PC-3 (cell line): ENCODE measurements at regions of chr3 and their contacts with region 1.

Region 1: GRCh38 chr3:45626096-45626887 is 31.7 kb downstream of the LIMD1 start:
- DNase-seq: peak; percentile 96
- ATAC-seq: peak; percentile 79
- H3K4me3 ChIP-seq: peak overlapping the region; percentile 47
- H3K27ac ChIP-seq: peak overlapping the region; percentile 98
- H3K4me1 ChIP-seq: peaks cover 41% of the 10 kb centered on the region
- H3K27me3 ChIP-seq: no peaks in the 10 kb centered on the region
- CTCF ChIP-seq: no peak

Region 2: DNA sequence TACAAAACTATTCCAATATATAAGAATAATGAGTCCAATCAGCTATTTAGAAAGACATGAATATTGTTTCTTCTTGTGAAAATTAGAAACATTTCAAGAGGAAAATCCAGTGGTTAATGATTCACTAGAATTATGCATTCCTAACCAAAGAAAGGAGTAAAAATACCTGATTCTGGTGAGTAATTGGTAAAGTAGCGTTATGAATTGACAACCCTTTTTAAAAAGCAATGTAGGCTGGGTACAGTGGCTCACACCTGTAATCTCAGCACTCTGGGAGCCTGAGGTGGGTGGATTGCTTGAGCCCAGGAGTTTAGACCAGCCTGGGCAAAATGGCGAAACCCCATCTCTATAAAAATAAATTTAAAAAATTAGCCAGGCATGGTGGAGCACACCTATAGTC is 1341.3 kb before region 1 on chr3:
- CTCF ChIA-PET with region 1: no interaction called
- POLR2A ChIA-PET with region 1: no interaction called
- intact Hi-C with region 1: no loop called
- DNase-seq: peak; percentile 7
- ATAC-seq: no peak
- H3K4me3 ChIP-seq: no peak overlapping the region
- H3K27ac ChIP-seq: no peak overlapping the region
- H3K4me1 ChIP-seq: no peaks in the 10 kb centered on the region
- H3K27me3 ChIP-seq: no peaks in the 10 kb centered on the region
- CTCF ChIP-seq: no peak

Region 3: DNA sequence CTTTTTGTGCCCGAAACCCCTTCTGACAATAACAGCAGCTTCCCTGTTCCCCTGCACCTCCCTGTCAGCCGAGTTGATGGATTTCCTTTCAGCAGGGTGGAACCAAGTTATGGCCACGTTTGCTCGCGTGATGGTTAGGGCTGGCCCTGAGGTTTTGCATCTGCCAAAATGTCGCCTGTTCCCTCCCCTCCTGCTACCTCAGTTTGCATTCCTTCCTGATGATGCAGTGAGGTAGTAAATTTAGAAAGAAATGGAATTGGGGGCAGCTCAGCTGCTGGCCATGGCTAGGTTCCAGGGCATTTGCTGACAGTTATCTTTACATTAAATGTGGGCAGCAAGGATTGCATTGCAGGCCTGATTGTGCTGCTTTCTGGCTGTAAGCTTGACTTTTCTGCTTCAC is 18.5 kb before region 1 on chr3:
- CTCF ChIA-PET with region 1: no interaction called
- POLR2A ChIA-PET with region 1: no interaction called
- intact Hi-C with region 1: loop called (anchors 1 kb)
- DNase-seq: peak; percentile 91
- ATAC-seq: peak; percentile 76
- H3K4me3 ChIP-seq: peak overlapping the region; percentile 17; the same call in 1 of the 2 replicates
- H3K27ac ChIP-seq: peak overlapping the region; percentile 76
- H3K4me1 ChIP-seq: peaks cover 55% of the 10 kb centered on the region
- H3K27me3 ChIP-seq: no peaks in the 10 kb centered on the region
- CTCF ChIP-seq: no peak

Region 4: GRCh38 chr3:45647148-45647619 is 20.9 kb after region 1 on chr3:
- CTCF ChIA-PET with region 1: interaction called, 3 read pairs
- POLR2A ChIA-PET with region 1: interaction called, 6 read pairs
- intact Hi-C with region 1: loop called (anchors 1 kb)
- DNase-seq: peak; percentile 95
- ATAC-seq: peak; percentile 51
- H3K4me3 ChIP-seq: peak overlapping the region; percentile 11; the same call in 1 of the 2 replicates
- H3K27ac ChIP-seq: peak overlapping the region; percentile 97
- H3K4me1 ChIP-seq: peaks cover 56% of the 10 kb centered on the region
- H3K27me3 ChIP-seq: no peaks in the 10 kb centered on the region
- CTCF ChIP-seq: no peak

Region 5: DNA sequence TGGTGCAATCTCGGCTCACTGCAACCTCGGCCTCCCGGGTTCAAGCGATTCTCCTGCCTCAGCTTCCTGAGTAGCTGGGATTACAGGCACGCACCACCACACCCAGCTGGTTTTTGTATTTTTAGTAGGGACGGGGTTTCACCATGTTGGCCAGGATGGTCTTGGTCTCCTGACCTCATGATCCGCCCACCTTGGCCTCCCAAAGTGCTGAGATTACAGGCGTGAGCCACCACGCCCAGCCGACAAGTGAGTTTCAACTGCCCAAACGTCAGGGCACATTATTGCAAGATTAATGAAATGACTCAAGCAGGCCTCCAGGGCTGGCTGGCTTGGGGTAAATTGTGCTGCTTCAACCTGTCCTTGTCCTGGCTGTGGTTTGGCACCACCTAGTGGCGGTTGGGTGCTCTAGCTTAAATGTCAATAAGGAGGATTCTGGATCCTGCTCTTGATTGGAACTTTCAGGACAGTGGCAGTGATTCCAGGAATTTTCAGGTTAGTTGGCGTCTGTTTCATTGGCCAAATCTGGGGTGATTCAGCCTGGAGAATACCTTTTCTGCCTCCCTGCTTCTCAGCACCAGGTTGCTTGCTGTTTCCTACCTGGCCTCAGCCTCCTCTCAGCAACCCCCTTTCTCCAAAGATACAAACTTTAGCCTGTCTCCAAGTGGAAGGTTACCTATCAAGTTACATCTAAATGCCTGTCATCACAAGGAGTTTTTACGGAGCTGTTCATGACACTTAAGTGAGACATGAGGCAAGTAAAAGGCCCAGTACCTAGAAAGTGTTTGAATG is 30.5 kb after region 1 on chr3:
- CTCF ChIA-PET with region 1: interaction called, 14 read pairs
- POLR2A ChIA-PET with region 1: interaction called, 15 read pairs
- intact Hi-C with region 1: loop called (anchors 1 kb)
- DNase-seq: peak; percentile 97
- ATAC-seq: peak; percentile 76
- H3K4me3 ChIP-seq: no peak overlapping the region
- H3K27ac ChIP-seq: peak overlapping the region; percentile 49
- H3K4me1 ChIP-seq: peaks cover 38% of the 10 kb centered on the region
- H3K27me3 ChIP-seq: no peaks in the 10 kb centered on the region
- CTCF ChIP-seq: peak; percentile 94